ENCODE measurements at regions of chr16 and their contacts with region 1.

Region 1: GRCh38 chr16:89949121-89949742 is 677 bp downstream of the DEF8 start:
- DNase-seq: no peak
- H3K4me3 Mint-ChIP-seq: peak overlapping the region; percentile 76
- H3K27ac Mint-ChIP-seq: no peak overlapping the region
- H3K4me1 Mint-ChIP-seq: peaks cover 13% of the 10 kb centered on the region
- H3K27me3 Mint-ChIP-seq: peaks cover 21% of the 10 kb centered on the region

Region 2: GRCh38 chr16:89972244-89973234 is 23.3 kb after region 1 on chr16:
- CTCF ChIA-PET with region 1: no interaction called
- POLR2A ChIA-PET with region 1: interaction called, 16 read pairs
- DNase-seq: peak; percentile 92
- H3K4me3 Mint-ChIP-seq: peak overlapping the region; percentile 99
- H3K27ac Mint-ChIP-seq: peak overlapping the region; percentile 95
- H3K4me1 Mint-ChIP-seq: peaks cover 36% of the 10 kb centered on the region
- H3K27me3 Mint-ChIP-seq: no peaks in the 10 kb centered on the region

Region 3: GRCh38 chr16:89983536-89983935 is 34.3 kb after region 1 on chr16:
- CTCF ChIA-PET with region 1: no interaction called
- POLR2A ChIA-PET with region 1: no interaction called
- DNase-seq: no peak
- H3K4me3 Mint-ChIP-seq: no peak overlapping the region
- H3K27ac Mint-ChIP-seq: peak overlapping the region; percentile 35
- H3K4me1 Mint-ChIP-seq: peaks cover 19% of the 10 kb centered on the region
- H3K27me3 Mint-ChIP-seq: no peaks in the 10 kb centered on the region

Measured in activated CD4-positive, alpha-beta memory T cell treated with anti-CD3 and anti-CD28 coated beads, Interleukin-2, amount 10 ng/mL, durations not matched to agents 7 days and 5 days (primary cell).